ENCODE measurements at regions of chr10 and their contacts with region 1.

Region 1: DNA sequence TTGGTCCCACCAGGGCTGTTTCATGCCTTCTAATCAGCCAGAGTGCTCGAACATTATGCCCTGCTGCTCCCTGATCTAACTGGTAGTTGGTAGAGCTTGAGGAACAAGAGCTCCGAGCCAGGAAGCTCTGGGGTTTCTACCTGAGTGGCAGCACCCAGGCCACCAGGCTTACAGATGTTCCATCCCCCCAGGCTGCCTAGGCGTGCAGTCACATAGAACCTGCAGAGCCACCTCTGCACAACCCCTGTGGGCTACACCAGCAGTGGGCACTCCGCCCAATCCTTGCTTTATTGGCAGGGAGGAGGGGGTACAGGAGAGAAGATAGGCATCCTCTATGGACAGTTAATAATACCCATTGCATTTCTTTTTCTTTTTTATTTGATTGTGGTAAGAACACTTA is 21.8 kb downstream of the MAP3K8 start:
- DNase-seq: no peak
- ATAC-seq: no peak

Region 2: DNA sequence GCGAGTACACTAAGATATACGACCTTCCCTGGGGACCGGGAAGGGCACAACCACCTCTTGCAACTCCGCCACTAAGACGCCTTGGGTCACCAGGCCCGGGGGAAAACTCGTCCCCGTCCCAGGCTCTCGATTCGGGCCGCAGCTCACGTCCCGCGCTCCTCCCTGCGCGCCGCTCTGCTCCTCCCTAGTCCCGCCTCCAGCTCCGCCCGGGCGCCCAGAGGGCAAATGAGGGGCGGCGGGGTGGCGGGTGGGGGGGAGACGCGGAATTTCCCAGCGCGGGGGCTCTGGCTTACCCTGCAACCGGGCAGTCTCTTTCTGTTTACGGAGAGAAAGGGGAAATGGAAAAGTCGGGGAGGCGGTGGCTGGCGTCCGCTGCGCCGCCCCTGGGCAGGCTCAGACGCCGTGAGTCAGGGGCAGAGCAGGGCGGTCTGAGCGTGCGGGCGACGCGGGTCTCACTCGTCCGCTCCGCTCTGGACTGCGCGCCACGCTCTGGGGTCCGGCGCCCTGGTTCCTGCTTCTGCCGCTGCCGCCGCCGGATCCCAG is 22.0 kb before region 1 on chr10 and contains the start of gene MAP3K8:
- intact Hi-C with region 1: loop called (anchors 2 kb)
- DNase-seq: peak; percentile 96
- ATAC-seq: peak; percentile 92
- total RNA-seq, gene MAP3K8: 6.7 TPM

Region 3: DNA sequence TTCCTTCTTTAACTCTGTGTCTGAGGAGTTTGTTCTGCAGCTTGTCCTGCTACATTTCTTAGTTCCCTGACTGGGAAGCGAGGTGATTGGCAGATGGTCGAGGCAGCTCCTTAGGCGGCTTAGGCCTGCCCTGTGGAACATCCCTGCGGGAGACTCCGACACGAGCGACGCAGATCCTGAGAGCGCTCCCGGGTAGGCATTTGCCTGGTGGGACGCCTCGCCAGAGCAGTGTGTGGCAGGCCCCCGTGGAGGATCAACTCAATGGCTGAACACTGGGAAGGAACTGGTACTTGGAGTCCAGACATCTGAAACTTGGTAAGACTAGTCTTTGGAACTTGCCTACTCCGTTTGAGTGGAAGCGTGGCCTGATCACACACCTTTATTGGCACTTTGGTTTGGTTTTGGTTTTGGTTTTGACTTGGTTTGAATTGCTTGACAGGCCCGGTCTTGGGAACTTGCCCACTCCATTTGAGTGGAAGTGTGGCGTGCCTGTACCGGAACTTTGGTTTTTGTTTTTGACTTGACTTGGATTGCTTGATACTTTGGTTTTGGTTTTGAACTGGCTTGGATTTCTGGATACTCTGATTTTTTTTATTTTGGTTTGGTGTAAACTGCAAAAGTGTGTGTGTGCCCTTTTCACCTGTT is 20.8 kb after region 1 on chr10:
- intact Hi-C with region 1: no loop called
- DNase-seq: no peak
- ATAC-seq: no peak